Caco-2 (cell line): ENCODE measurements at regions of chr20 and their contacts with region 1.

Region 1: GRCh38 chr20:34312544-34313217 is 9.5 kb upstream of the AHCY start:
- DNase-seq: peak; percentile 97 to 99
- H3K4me3 ChIP-seq: peak overlapping the region; percentile 53
- H3K4me3 Mint-ChIP-seq: peak overlapping the region; percentile 77
- H3K27ac Mint-ChIP-seq: peak overlapping the region; percentile 79
- H3K4me1 ChIP-seq: peaks cover 34% of the 10 kb centered on the region
- H3K4me1 Mint-ChIP-seq: peaks cover 16% of the 10 kb centered on the region
- H3K27me3 ChIP-seq: no peaks in the 10 kb centered on the region
- H3K27me3 Mint-ChIP-seq: no peaks in the 10 kb centered on the region
- CTCF ChIP-seq: peak; percentile 100

Region 2: DNA sequence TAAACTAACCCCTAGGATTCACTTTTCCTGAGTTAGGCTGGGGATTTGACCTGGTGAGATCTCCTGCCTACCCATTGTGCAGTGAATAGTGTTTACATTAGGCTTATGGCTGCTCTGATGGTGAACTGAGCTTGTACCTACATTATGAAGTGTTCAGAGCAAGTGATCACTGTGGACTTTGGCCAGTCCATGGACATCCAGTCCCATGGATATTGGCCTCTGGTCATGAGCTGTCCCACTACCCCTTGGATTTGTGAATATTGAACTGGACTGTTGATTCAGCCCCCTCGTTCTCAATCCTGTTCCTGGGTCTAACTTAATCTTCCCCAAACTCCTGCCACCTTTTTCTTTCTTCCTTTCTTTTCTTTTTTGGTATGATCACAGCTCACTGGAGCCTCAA is 57.7 kb before region 1 on chr20:
- CTCF ChIA-PET with region 1: interaction called, 27 read pairs
- POLR2A ChIA-PET with region 1: no interaction called
- intact Hi-C with region 1: loop called (anchors 1 kb)
- DNase-seq: peak in 1 of 2 experiments; percentile 34
- H3K4me3 ChIP-seq: no peak overlapping the region
- H3K4me3 Mint-ChIP-seq: no peak overlapping the region
- H3K27ac Mint-ChIP-seq: no peak overlapping the region
- H3K4me1 ChIP-seq: peaks cover 19% of the 10 kb centered on the region
- H3K4me1 Mint-ChIP-seq: peaks cover 27% of the 10 kb centered on the region
- H3K27me3 ChIP-seq: no peaks in the 10 kb centered on the region
- H3K27me3 Mint-ChIP-seq: no peaks in the 10 kb centered on the region
- CTCF ChIP-seq: no peak

Region 3: DNA sequence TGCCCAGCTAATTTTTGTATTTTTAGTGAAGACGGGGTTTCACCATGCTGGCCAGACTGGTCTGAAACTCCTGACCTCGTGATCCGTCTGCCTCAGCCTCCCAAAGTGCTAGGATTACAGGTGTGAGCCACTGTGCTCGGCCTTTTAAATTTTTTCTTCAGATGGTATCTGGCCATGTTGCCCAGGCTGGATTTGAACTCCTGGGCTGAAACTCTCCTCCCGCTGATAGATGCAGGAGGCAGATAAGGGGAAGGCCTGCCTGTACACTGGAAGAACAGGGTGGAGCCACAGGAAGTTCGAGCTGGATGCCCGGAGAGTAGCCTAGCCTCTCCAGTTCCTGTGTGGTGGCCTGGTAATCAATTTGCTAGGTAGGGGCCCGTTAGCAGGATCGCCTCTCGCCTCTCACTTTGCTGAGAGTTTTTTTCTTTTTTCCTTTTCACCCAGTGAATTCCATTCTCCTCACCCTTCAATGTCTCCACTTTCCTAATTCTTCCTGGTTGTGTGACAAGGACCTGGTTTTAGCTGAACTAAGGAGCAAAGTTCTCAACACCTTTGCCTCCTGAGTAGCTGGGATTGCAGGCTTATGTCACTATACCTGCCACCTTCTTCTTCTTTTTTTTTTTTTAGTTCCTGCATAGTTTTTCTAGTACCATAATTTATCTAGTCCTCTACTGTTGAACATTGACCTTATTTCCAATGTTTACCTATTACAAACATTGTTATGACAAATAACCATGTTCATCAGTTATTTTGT is 31.0 kb after region 1 on chr20:
- CTCF ChIA-PET with region 1: interaction called, 21 read pairs
- POLR2A ChIA-PET with region 1: no interaction called
- intact Hi-C with region 1: no loop called
- DNase-seq: peak; percentile 55 to 80
- H3K4me3 ChIP-seq: no peak overlapping the region
- H3K4me3 Mint-ChIP-seq: peak overlapping the region; percentile 14
- H3K27ac Mint-ChIP-seq: peak overlapping the region; percentile 76
- H3K4me1 ChIP-seq: peaks cover 36% of the 10 kb centered on the region
- H3K4me1 Mint-ChIP-seq: peaks cover 18% of the 10 kb centered on the region
- H3K27me3 ChIP-seq: no peaks in the 10 kb centered on the region
- H3K27me3 Mint-ChIP-seq: no peaks in the 10 kb centered on the region
- CTCF ChIP-seq: no peak

Region 4: GRCh38 chr20:34401741-34402455 is 89.2 kb after region 1 on chr20:
- CTCF ChIA-PET with region 1: interaction called, 10 read pairs
- POLR2A ChIA-PET with region 1: interaction called, 3 read pairs
- intact Hi-C with region 1: loop called (anchors 2 kb)
- DNase-seq: no peak
- H3K4me3 ChIP-seq: no peak overlapping the region
- H3K4me3 Mint-ChIP-seq: no peak overlapping the region
- H3K27ac Mint-ChIP-seq: no peak overlapping the region
- H3K4me1 ChIP-seq: peaks cover 26% of the 10 kb centered on the region
- H3K4me1 Mint-ChIP-seq: peaks cover 29% of the 10 kb centered on the region
- H3K27me3 ChIP-seq: no peaks in the 10 kb centered on the region
- H3K27me3 Mint-ChIP-seq: no peaks in the 10 kb centered on the region
- CTCF ChIP-seq: no peak

Region 5: GRCh38 chr20:34445177-34446065 is 132.7 kb after region 1 on chr20:
- CTCF ChIA-PET with region 1: interaction called, 14 read pairs
- POLR2A ChIA-PET with region 1: no interaction called
- intact Hi-C with region 1: no loop called
- DNase-seq: no peak
- H3K4me3 ChIP-seq: no peak overlapping the region
- H3K4me3 Mint-ChIP-seq: no peak overlapping the region
- H3K27ac Mint-ChIP-seq: no peak overlapping the region
- H3K4me1 ChIP-seq: 0 out of 2 replicates have a peak, but pooled peaks cover 8% of the 10 kb centered on the region
- H3K4me1 Mint-ChIP-seq: peaks cover 20% of the 10 kb centered on the region
- H3K27me3 ChIP-seq: no peaks in the 10 kb centered on the region
- H3K27me3 Mint-ChIP-seq: no peaks in the 10 kb centered on the region
- CTCF ChIP-seq: no peak

Region 6: DNA sequence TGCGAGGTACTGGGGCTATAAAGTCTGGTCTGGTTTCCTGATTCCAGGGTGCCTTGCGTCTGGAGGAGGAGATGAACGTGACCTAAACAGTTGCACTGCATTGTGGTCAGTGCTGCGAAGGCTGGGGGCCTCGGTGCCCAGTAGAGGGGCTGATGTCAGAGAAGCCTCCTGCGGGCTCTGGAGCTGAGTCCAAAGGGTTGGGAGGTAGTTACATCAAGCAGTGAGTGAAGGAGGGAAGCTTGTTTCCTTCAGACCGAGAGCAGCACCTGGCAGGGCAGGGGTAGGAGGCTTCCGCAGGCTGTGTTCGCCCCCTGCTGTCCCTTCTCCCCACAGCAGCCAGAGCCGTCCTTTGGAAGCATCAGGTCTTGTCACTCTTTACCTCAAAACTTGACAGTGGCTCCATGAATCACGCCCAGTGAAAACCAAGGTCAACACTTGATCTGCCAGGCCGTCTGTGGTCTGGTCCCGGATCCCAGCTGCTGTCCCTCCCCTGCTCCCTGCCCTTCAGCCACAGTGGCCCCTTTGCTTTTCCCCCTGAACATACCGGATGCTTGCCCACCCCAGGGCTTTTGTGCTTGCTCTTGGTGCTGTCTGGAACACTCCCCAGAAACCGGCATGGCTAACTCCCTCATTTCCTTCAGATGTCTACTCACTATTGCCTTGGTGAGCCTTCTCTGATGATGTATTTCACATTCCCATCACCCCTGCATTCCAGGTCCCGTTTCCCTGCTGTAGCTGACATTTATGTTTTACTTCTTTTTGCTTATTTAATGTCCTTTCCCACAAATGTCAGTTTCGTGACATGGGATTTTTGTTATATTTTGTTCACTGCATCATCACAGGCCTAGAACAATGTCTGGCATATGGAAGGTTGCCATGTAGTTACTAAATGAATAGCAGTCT is 210.5 kb after region 1 on chr20:
- CTCF ChIA-PET with region 1: interaction called, 130 read pairs
- POLR2A ChIA-PET with region 1: interaction called, 7 read pairs
- intact Hi-C with region 1: loop called (anchors 1 kb)
- DNase-seq: peak; percentile 89 to 93
- H3K4me3 ChIP-seq: no peak overlapping the region
- H3K4me3 Mint-ChIP-seq: no peak overlapping the region
- H3K27ac Mint-ChIP-seq: peak overlapping the region; percentile 25
- H3K4me1 ChIP-seq: peaks cover 46% of the 10 kb centered on the region
- H3K4me1 Mint-ChIP-seq: peaks cover 50% of the 10 kb centered on the region
- H3K27me3 ChIP-seq: no peaks in the 10 kb centered on the region
- H3K27me3 Mint-ChIP-seq: no peaks in the 10 kb centered on the region
- CTCF ChIP-seq: peak; percentile 96 to 99

Region 7: DNA sequence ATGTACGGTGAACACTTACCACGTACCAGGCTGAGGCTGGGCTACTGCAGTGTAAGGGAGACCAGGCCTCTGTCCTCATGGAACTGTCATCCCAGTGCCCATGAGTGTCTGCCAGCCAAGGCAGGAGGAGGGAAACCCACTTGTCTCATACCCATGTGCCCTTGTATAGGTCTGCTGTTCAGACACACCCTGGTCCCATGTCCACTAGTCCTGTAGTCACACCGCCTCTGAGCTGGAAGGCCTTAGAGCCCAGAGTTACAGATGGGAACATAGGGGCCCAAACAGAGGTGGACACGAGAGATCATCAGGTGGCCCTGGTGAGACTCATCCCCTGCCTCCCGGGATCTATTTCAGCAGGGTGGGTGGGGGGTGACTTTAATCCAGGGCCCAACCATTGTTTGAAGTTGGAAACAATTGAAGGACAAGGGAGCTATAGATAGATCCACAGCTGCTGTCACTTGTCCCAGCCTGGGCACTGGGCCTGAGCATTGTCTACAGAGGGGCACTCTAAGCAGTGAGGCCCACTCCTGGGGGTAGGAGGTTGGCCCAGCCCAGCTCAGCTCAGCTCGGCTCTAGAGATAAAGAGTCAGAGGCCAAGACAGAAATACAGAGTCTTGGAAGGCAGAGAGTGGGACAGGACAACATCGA is 657.6 kb after region 1 on chr20:
- CTCF ChIA-PET with region 1: interaction called, 15 read pairs
- POLR2A ChIA-PET with region 1: no interaction called
- intact Hi-C with region 1: no loop called
- DNase-seq: no peak
- H3K4me3 ChIP-seq: no peak overlapping the region
- H3K4me3 Mint-ChIP-seq: no peak overlapping the region
- H3K27ac Mint-ChIP-seq: no peak overlapping the region
- H3K4me1 ChIP-seq: no peaks in the 10 kb centered on the region
- H3K4me1 Mint-ChIP-seq: no peaks in the 10 kb centered on the region
- H3K27me3 ChIP-seq: no peaks in the 10 kb centered on the region
- H3K27me3 Mint-ChIP-seq: peaks cover 2% of the 10 kb centered on the region
- CTCF ChIP-seq: no peak